CD4-positive, alpha-beta memory T cell (primary cell): ENCODE measurements at regions of chr2 and their contacts with region 1.

Region 1: DNA sequence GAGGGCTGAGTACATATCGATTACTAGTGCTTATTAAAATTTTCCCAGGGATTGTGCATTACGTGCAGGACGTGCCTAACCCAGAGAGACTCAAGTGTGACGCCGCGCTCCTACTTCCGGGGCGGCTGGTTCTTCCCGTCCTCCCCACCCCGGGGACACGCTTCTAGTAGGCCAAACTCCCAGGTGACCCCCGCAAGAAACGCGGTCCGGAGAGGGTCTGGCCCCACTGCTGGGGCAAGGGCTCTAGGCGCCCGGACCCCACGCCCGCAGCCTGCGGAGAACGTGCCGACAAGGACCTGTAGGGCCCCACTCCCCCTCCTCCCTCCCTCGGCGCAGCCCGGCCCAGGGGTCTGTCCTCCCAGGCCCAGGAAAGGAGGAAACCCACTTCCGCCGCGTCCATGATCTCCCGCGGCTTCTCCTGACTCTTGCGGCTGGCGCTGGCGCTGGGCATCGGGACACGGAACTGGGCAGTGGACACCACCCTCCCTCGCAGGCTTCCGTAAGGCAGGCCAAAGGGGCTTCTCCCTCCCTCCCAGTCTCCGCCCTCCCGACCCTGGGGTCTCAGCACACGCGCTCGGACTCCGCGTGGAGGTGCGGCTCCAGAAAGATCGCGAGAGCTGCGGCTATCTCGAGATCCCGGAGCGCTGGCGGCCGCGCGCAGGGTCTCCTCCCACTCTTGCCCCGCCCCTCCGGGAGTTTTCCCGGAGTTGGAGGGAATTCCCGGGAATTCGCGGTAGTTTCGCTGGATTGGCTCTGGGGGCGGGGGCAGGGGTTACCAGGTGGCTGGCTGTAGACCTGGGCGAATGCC is at the start of gene DARS1:
- DNase-seq: peak; percentile 56 to 81 (median 78)
- H3K4me3 ChIP-seq: peak within 1 kb of the TSS; percentile 43 to 82
- H3K4me3 Mint-ChIP-seq: peak within 1 kb of the TSS; percentile 95 to 99 (median 98)
- H3K27ac ChIP-seq: peak within 1 kb of the TSS; percentile 99
- H3K27ac Mint-ChIP-seq: peak within 1 kb of the TSS; percentile 96 to 100 (median 99)
- H3K4me1 ChIP-seq: peaks cover 35% of the 10 kb centered on the region
- H3K4me1 Mint-ChIP-seq: peaks cover 26 to 61% (median 35%) of the 10 kb centered on the region in 4 donors
- H3K27me3 ChIP-seq: no peaks in the 10 kb centered on the region
- H3K27me3 Mint-ChIP-seq: no peaks in the 10 kb centered on the region
- total RNA-seq, gene DARS1: 84.9 to 90.1 TPM

Region 2: GRCh38 chr2:135876066-135876711 is 109.0 kb before region 1 on chr2 and contains the start of gene MCM6:
- CTCF ChIA-PET with region 1: no interaction called
- POLR2A ChIA-PET with region 1: no interaction called
- intact Hi-C with region 1: loop called (anchors 5 kb)
- DNase-seq: peak; percentile 97 to 98 (median 98)
- H3K4me3 ChIP-seq: peak within 1 kb of the TSS; percentile 82 to 84
- H3K4me3 Mint-ChIP-seq: peak within 1 kb of the TSS; percentile 81 to 96 (median 95)
- H3K27ac ChIP-seq: peak within 1 kb of the TSS; percentile 80
- H3K27ac Mint-ChIP-seq: peak within 1 kb of the TSS; percentile 94 to 97 (median 95)
- H3K4me1 ChIP-seq: peaks cover 31% of the 10 kb centered on the region
- H3K4me1 Mint-ChIP-seq: peaks cover 27 to 47% (median 37%) of the 10 kb centered on the region in 4 donors
- H3K27me3 ChIP-seq: no peaks in the 10 kb centered on the region
- H3K27me3 Mint-ChIP-seq: peaks cover 0 to 1% of the 10 kb centered on the region in 2 donors
- total RNA-seq, gene MCM6: 31.2 to 32.7 TPM

Region 3: DNA sequence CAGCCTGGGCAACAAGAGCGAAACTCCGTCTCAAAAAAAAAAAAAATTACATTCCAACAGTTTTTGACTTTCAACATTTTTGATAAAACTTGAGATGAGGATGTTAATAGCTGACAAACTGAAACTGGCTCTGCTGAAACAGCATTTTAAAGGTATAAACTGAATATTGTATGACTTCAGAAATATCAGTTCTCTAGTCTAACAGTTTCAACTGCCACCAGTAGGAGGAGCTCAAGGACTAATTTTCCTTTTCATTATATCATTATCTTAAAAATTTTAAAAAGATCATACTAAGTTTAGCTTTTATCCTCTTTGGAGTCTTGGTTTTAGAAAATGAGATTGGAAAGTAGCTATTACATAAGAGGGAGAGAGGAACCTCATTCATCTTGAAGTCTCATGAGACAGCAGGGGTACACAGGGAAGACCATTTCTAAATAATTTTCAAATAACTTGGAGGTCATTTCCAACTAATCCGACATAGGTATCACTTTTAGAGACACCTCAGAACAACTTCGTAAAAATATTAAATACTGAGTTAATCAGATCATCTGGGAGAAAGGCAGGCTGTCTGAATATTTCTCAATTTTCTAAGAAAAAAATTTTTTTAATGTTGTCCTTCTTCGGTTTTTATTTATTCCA is 71.4 kb before region 1 on chr2:
- CTCF ChIA-PET with region 1: interaction called, 4 read pairs
- POLR2A ChIA-PET with region 1: no interaction called
- intact Hi-C with region 1: loop called (anchors 5 kb)
- DNase-seq: peak; percentile 48 to 61 (median 58)
- H3K4me3 ChIP-seq: no peak overlapping the region
- H3K4me3 Mint-ChIP-seq: no peak overlapping the region
- H3K27ac ChIP-seq: no peak overlapping the region
- H3K27ac Mint-ChIP-seq: peak overlapping the region; percentile 34 to 90 (median 81)
- H3K4me1 ChIP-seq: no peaks in the 10 kb centered on the region
- H3K4me1 Mint-ChIP-seq: peaks cover 0 to 8% (median 3%) of the 10 kb centered on the region in 4 donors
- H3K27me3 ChIP-seq: no peaks in the 10 kb centered on the region
- H3K27me3 Mint-ChIP-seq: no peaks in the 10 kb centered on the region

Region 4: DNA sequence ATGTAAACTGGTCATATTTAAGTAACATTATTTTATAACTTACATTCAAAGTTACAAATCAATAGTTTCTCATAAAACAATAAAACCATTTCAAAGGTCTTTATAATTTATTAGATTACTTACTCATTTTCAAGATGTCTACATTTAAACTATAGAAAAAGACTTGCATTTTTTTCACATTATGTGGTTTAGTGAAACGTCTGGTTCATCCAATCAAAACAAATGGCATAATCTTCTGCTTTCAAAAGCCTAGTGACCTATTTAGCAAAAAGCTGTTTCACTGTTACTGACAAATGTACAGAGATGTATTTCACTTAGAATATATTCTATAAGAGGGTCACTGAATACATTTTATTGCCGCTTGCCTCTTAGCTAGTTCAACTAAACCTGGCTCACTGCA is 59.7 kb before region 1 on chr2:
- CTCF ChIA-PET with region 1: no interaction called
- POLR2A ChIA-PET with region 1: no interaction called
- intact Hi-C with region 1: no loop called
- DNase-seq: no peak
- H3K4me3 ChIP-seq: no peak overlapping the region
- H3K4me3 Mint-ChIP-seq: no peak overlapping the region
- H3K27ac ChIP-seq: no peak overlapping the region
- H3K27ac Mint-ChIP-seq: peak overlapping the region in 2 of 7 donors; percentile 8 to 23
- H3K4me1 ChIP-seq: no peaks in the 10 kb centered on the region
- H3K4me1 Mint-ChIP-seq: peaks cover 0 to 2% (median under 1%) of the 10 kb centered on the region in 4 donors
- H3K27me3 ChIP-seq: no peaks in the 10 kb centered on the region
- H3K27me3 Mint-ChIP-seq: no peaks in the 10 kb centered on the region

Region 5: GRCh38 chr2:135948642-135949355 is 36.4 kb before region 1 on chr2:
- CTCF ChIA-PET with region 1: interaction called, 3 read pairs
- POLR2A ChIA-PET with region 1: interaction called, 16 read pairs
- intact Hi-C with region 1: loop called (anchors 2 kb)
- DNase-seq: peak; percentile 45 to 68 (median 58)
- H3K4me3 ChIP-seq: no peak overlapping the region
- H3K4me3 Mint-ChIP-seq: peak overlapping the region; percentile 38 to 80 (median 68)
- H3K27ac ChIP-seq: peak overlapping the region; percentile 61
- H3K27ac Mint-ChIP-seq: peak overlapping the region; percentile 81 to 95 (median 92)
- H3K4me1 ChIP-seq: peaks cover 36% of the 10 kb centered on the region
- H3K4me1 Mint-ChIP-seq: peaks cover 36 to 72% (median 53%) of the 10 kb centered on the region in 4 donors
- H3K27me3 ChIP-seq: no peaks in the 10 kb centered on the region
- H3K27me3 Mint-ChIP-seq: no peaks in the 10 kb centered on the region

Region 6: DNA sequence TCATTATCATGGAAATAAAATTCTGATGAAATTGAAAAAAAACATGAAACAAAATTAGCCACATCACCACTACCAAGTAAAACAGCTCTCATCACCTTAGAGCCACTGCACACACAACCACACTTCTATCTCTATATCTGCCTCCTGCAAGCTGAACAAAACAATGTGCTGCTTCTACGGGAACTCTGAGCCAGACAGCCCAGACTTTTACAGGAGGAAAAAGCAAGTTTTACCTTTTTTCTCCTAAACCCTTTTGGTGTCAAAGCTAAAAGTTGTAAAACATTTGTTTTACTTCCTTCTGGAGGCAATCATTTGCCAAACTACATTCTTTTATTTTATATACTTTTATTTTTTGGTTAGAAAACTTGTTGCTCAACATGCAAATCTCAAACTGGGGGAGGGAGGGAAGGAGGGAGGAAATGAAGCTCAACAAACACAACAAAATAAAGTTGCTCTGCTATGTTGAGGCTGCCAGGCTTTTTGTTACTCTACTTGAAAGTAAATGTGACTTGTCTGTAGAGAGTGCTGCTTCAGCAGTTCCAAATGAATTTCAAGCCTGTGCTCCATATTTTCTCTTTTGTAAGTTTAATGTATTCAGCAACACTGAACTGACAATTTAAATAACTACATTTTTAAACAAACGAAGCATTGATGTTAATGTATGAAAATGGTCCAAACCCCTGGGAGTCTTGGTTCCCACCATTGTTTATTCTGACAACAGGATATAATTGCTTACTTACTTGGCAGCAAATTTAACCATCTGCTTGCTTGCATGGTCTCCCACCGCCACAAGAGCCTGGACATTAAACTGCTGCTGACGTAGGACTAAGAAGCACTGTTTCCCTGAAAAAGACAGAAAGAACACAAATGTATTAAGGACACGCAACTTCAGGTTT is 24.3 kb before region 1 on chr2:
- CTCF ChIA-PET with region 1: interaction called, 5 read pairs
- POLR2A ChIA-PET with region 1: interaction called, 11 read pairs
- intact Hi-C with region 1: loop called (anchors 2 kb)
- DNase-seq: peak; percentile 38 to 55 (median 43)
- H3K4me3 ChIP-seq: peak overlapping the region in 1 of 2 donors; percentile 6
- H3K4me3 Mint-ChIP-seq: peak overlapping the region; percentile 9 to 79 (median 53)
- H3K27ac ChIP-seq: peak overlapping the region; percentile 60
- H3K27ac Mint-ChIP-seq: peak overlapping the region; percentile 76 to 96 (median 89)
- H3K4me1 ChIP-seq: peaks cover 49% of the 10 kb centered on the region
- H3K4me1 Mint-ChIP-seq: peaks cover 44 to 70% (median 55%) of the 10 kb centered on the region in 4 donors
- H3K27me3 ChIP-seq: no peaks in the 10 kb centered on the region
- H3K27me3 Mint-ChIP-seq: no peaks in the 10 kb centered on the region

Region 7: DNA sequence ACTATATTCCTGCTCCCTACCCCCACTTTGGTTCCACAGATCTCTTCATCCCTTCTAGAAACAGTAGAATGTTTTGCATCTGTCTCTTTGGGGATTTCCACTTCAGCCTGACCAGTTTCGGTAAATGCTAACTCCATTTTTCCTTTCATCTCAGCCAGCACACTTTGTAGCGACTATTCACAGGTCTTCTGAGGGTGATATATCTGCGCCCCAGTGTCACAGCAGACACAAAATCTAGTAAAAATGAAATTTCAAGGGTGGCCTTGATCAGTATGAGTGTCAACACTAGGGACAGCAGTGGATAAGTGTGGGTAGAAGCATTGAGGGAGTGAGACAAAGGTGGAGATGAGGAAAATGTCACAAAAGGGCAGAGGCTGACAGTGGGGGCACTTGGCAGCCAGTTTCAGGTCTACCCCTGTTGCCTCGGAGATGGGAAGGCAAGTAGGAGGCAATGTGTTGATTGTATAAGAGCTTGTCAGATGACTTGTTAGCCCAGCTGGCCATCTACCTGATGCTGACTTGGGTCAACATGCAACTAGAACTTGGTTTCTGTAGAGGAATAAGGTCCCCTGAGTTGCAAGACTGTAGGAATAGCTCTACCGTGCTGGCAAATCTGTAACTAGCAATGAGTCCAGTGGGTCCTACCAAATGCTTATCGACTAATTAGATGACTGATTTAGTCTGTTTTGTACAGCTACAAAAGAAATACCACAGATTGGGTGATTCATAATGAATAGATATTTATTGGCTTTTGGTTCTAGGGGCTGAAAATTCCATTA is 72.0 kb after region 1 on chr2:
- CTCF ChIA-PET with region 1: interaction called, 3 read pairs
- POLR2A ChIA-PET with region 1: interaction called, 5 read pairs
- intact Hi-C with region 1: loop called (anchors 2 kb)
- DNase-seq: peak; percentile 17 to 52 (median 37)
- H3K4me3 ChIP-seq: peak overlapping the region in 1 of 2 donors; percentile 6
- H3K4me3 Mint-ChIP-seq: peak overlapping the region in 7 of 8 donors; percentile 60 to 73 (median 69)
- H3K27ac ChIP-seq: peak overlapping the region; percentile 42
- H3K27ac Mint-ChIP-seq: peak overlapping the region; percentile 59 to 92 (median 90)
- H3K4me1 ChIP-seq: peaks cover 71% of the 10 kb centered on the region
- H3K4me1 Mint-ChIP-seq: peaks cover 51 to 80% (median 61%) of the 10 kb centered on the region in 4 donors
- H3K27me3 ChIP-seq: no peaks in the 10 kb centered on the region
- H3K27me3 Mint-ChIP-seq: no peaks in the 10 kb centered on the region

Region 8: DNA sequence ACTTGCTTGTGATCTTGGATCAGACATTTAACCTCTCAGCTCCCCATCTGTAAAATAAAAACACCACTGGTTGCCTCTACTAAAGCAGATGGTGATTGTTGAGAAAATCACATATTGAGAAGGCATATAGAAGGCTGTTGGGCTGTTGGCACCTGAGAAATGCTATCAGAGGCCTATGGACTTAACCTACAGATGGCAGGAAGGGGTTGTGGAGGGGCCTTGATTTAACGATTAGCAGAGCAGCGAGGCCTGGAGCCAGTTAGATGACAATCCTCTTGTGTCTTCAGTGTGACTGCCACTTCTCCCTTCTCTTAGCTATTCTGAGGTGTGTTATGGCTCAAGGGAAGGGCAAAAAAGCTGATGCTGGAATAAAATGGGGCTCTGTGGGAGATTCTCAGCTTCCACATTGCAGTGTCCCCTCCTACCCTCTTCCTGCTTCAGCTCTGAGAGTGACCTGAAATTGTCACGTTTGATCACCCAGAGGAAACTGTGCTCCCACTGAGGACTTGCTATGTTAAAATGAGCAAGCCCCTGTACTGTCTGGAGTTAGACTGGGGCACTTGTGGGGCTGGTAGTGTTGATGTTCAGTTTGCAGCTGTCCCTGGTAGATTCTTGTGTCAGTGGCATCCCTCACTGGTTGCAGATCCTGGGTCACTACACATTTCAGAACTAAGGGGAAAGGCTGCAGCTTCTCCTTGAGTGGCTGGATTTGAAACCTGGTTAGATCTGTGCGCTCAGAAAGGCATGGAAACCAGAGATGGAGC is 101.2 kb after region 1 on chr2:
- CTCF ChIA-PET with region 1: no interaction called
- POLR2A ChIA-PET with region 1: no interaction called
- intact Hi-C with region 1: no loop called
- DNase-seq: no peak
- H3K4me3 ChIP-seq: no peak overlapping the region
- H3K4me3 Mint-ChIP-seq: no peak overlapping the region
- H3K27ac ChIP-seq: no peak overlapping the region
- H3K27ac Mint-ChIP-seq: peak overlapping the region in 4 of 7 donors; percentile 7 to 38 (median 14)
- H3K4me1 ChIP-seq: peaks cover 2% of the 10 kb centered on the region
- H3K4me1 Mint-ChIP-seq: peaks cover 0 to 13% (median 2%) of the 10 kb centered on the region in 4 donors
- H3K27me3 ChIP-seq: no peaks in the 10 kb centered on the region
- H3K27me3 Mint-ChIP-seq: no peaks in the 10 kb centered on the region

Region 9: DNA sequence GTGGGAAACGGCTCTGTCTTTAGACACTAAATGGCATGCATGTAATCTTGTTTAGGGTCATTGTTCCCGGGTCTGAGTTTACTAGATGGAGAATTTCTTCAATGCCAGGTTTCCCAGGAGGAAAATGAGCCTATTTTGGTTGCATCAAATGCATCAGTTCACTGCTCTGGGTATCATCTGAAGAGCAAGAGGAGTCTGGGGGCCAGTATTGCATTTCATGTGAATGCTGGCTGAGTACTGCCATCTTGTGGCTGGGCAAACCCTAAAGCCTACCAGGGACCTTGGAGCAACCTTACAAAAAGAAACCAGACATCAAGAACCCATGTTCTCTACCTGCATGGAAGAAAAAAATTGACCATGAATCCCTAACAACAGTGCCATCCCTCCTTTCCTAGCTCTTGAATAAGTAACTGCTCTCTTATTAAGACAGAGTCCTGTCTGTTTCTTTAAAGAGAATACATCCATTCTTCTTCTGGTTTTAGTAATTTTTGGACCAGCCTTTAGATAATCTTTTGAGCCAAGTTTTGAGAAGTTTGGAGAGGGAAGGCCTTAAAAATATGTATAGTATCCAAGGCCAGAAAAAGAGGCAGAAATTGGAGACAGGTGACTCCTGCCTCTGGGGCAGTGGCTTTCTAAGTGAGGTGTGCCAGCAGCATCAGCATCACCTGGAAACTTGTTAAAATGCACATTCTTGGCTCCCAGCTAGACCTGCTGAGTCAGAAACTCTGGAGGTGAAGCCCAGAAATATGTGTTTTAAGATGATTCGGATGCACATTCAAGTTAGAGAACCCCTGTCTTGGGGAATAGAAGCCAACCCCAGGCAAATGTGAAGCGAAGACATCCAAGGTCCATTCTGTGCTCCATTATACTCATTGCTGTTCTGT is 393.7 kb after region 1 on chr2:
- CTCF ChIA-PET with region 1: interaction called, 4 read pairs
- POLR2A ChIA-PET with region 1: interaction called, 5 read pairs
- intact Hi-C with region 1: loop called (anchors 2 kb)
- DNase-seq: peak; percentile 71 to 78 (median 74)
- H3K4me3 ChIP-seq: no peak overlapping the region
- H3K4me3 Mint-ChIP-seq: no peak overlapping the region
- H3K27ac ChIP-seq: no peak overlapping the region
- H3K27ac Mint-ChIP-seq: peak overlapping the region in 6 of 7 donors; percentile 70 to 89 (median 78)
- H3K4me1 ChIP-seq: peaks cover 55% of the 10 kb centered on the region
- H3K4me1 Mint-ChIP-seq: peaks cover 49 to 79% (median 53%) of the 10 kb centered on the region in 4 donors
- H3K27me3 ChIP-seq: no peaks in the 10 kb centered on the region
- H3K27me3 Mint-ChIP-seq: no peaks in the 10 kb centered on the region